ENCODE measurements at regions of chr17 and their contacts with region 1.

Region 1: GRCh38 chr17:55576996-55577586 is 65.8 kb upstream of the SMIM36 start:
- DNase-seq: peak; percentile 71
- ATAC-seq: peak; percentile 62
- H3K4me3 ChIP-seq: peak overlapping the region; percentile 45
- H3K27ac ChIP-seq: peak overlapping the region; percentile 84
- H3K4me1 ChIP-seq: peaks cover 25% of the 10 kb centered on the region
- H3K27me3 ChIP-seq: no peaks in the 10 kb centered on the region
- CTCF ChIP-seq: no peak

Region 2: GRCh38 chr17:55607731-55608341 is 30.7 kb after region 1 on chr17:
- CTCF ChIA-PET with region 1: no interaction called
- POLR2A ChIA-PET with region 1: no interaction called
- intact Hi-C with region 1: loop called (anchors 2 kb)
- DNase-seq: peak; percentile 97
- ATAC-seq: peak; percentile 96
- H3K4me3 ChIP-seq: no peak overlapping the region
- H3K27ac ChIP-seq: no peak overlapping the region
- H3K4me1 ChIP-seq: peaks cover 22% of the 10 kb centered on the region
- H3K27me3 ChIP-seq: peaks cover 17% of the 10 kb centered on the region
- CTCF ChIP-seq: no peak

Region 3: DNA sequence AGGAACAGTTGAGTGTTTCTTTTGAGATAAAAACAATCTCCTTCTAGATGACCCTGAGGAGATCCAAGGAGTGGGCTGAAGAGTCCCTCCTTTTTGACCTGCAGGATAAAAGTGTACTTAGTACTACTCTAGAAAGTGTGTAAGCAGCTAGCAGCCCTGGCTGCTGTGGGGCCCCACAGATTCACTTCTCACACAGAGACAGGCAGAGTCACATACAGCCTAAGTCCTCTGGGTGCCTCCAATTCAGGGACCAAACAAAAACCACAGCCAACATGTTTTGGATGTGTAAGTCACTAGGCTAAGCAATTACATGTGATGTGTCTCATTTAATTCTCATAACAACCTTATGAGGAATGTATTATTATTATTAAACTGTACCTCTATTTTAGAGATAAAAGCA is 48.4 kb after region 1 on chr17:
- CTCF ChIA-PET with region 1: no interaction called
- POLR2A ChIA-PET with region 1: no interaction called
- intact Hi-C with region 1: no loop called
- DNase-seq: no peak
- ATAC-seq: no peak
- H3K4me3 ChIP-seq: no peak overlapping the region
- H3K27ac ChIP-seq: no peak overlapping the region
- H3K4me1 ChIP-seq: no peaks in the 10 kb centered on the region
- H3K27me3 ChIP-seq: peaks cover 55% of the 10 kb centered on the region
- CTCF ChIP-seq: no peak